ENCODE measurements at regions of chr1 and their contacts with region 1.

Region 1: DNA sequence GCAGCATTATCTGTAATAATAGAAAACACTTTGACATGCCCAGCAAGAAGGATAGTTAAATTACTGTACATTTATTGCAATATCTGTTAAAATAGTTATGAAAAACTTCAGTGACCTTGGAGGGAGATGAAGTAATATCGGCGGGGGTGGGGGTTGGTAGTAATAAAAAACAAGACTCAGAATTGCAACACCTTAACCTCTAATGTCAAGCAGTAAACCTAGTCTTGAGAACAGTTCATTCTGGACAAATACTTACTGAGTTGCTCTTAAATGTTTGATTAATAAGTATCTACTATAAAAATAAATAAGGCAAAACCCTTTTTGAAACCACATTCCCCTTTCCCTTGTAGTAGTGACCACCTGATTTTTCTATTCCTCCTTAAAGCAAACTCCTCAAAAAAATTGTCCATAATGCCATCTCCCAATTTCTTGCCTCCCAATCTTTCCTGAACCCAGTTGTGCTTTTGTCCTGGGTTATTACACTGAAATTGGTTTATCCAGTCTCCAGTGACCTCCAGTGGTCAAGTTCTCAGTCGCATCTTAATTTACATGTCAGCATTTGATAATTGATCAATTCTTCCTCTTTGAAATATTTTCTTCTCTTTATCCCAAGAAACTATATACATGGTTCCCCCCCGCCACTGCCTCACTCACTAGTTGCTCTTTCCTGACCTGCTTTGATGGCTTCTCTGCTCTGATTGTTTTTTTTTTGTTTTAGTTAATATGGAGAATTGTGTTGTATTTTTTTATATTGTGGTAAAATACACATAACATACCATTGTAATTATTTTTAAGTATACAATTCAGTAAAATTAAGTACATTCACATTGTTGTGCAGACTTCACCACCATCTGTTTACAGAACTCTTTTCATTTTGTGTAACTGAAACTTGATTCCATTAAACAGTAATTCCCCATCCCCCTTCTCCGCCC is 36.8 kb downstream of the RAP1A start:
- DNase-seq: no peak
- ATAC-seq: peak; percentile 31

Region 2: DNA sequence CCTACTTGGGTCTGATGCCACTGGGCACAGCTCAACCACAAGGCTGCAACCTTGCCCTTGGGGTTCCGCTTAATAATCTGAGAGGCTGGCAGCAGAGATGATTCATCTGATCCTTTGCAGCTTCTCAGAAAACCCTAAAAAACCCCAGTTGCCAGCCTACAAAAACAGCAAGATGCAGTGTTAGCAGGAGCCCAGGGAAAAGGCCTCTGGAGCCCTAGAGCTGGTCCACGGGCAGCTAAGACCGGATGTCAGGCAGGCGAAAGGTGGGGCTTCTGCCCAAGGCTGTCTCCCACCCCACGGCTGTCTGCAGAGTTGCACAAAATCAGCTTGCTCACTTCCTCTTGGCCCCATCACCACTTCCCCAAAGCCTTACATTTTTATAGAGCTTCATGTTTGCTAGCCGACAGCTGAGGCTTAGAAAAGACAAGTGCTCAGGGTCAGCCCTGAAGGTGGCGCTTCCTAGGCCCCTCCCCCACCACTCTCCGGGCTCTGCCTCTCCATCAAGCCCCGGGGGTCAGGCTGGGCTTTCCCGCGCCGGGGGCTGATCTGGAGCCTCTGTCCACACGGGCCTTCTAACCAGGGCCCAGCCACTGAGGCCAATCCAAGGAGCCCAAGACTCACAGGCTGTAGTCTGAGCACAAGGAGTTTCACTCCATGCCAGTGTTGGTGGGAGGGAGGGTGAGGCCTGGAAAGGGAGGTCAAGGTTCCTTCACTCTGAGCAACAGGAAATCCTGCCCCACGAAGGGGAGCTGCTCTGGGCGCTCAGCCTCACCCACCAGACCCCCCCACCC is 148.7 kb before region 1 on chr1:
- intact Hi-C with region 1: loop called in 1 of 2 experiments (anchors 5 kb)
- DNase-seq: peak; percentile 85 to 88
- ATAC-seq: peak; percentile 83

Region 3: DNA sequence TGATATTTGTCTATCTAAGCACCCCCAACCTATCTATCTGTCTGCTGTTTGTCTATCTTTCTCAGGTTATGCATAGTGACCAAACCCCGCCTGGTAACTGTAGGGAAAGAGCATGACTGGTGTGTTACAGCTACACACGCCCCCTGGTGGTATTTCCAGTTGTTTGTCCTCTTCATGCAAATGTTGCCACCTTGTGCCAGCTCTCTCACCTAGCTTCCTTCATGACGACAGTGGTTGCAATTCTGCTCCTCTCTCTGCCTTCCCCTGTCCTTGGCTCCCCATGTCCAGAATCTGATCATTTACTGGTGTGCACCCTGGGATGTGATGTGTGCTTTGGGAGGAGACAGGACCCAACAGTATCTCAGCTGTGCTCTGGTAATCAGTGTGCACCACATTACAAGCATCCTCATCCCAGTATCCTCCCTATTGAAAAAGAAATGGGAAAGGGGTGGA is 91.0 kb after region 1 on chr1:
- intact Hi-C with region 1: loop called in 1 of 2 experiments (anchors 10 kb)
- DNase-seq: peak; percentile 63 to 80
- ATAC-seq: peak; percentile 95

Measured in left colon (tissue), 2 donors.